ENCODE measurements at regions of chr14 and their contacts with region 1.

Region 1: DNA sequence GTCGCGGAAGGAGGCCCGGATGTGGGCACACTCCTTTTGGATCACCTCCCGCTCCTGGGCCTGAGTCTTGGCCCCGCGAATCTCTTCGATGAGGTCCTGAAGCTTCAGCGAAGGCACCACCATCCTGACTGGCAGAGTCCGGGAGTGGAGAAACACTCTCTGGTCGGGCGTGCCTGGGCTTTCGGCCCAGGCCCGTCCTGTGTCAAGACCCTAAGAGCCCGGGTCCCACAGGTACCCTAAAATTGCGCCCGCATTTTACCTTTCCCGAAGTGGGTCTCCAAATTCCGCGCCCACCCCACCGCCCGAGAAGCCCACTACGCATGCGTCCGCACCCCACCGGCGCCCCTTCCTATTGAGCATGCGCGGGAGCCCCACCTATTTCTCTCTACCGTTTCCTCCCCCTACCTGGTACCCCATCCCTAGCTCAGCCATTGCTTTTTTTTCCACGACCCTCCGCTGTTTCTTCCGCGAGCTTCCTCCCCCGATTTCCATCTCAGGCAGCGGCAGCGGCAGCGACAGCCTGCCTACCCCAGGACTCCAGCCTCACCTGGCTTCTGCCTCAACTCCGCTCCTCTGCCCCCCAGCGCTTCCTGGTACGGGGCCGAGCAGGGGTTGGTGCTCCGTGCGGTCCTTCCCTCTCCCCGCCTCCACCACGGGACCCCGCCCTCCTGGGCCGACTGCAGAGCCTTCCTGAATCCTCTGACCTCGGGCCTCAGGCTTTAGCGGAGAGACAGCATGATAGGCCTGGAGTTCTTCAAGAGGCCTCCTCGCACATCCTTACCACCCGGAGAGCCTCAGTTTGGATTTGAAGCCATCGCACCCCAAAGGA is at the start of gene AP1G2:
- DNase-seq: peak; percentile 90
- CTCF ChIP-seq: no peak

Region 2: GRCh38 chr14:23478111-23478759 is 89.2 kb before region 1 on chr14:
- in situ Hi-C with region 1: loop called (anchors 5 kb)
- DNase-seq: peak; percentile 50
- CTCF ChIP-seq: peak; percentile 70

Measured in GM13977 (cell line).